MCF 10A (cell line): ENCODE measurements at regions of chr5 and their contacts with region 1.

Region 1: GRCh38 chr5:53303105-53303504 is 177.3 kb upstream of the FST start:
- DNase-seq: peak; percentile 80
- H3K4me3 Mint-ChIP-seq: no peak overlapping the region
- H3K27ac Mint-ChIP-seq: no peak overlapping the region
- H3K4me1 Mint-ChIP-seq: peaks cover 17% of the 10 kb centered on the region
- H3K27me3 Mint-ChIP-seq: no peaks in the 10 kb centered on the region
- CTCF ChIP-seq: no peak

Region 2: DNA sequence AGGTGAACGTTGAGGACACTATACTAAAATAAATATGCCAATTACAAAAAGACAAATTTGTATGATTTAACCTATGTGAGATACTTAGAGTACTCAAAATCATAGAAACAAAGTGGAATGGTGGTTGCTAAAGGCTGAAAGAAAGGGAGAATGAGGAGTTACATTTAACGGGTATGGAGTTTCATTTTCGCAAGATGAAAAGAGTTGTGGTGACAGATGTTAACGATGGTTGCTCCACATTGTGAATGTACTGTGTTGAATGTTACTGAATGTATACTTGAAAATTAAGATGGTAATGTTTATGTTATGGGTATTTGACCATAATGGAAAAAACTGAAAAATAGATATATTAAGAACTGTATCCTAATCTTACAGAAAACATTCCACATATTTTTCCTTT is 142.2 kb before region 1 on chr5:
- CTCF ChIA-PET with region 1: no interaction called
- POLR2A ChIA-PET with region 1: no interaction called
- intact Hi-C with region 1: no loop called
- DNase-seq: no peak
- H3K4me3 Mint-ChIP-seq: no peak overlapping the region
- H3K27ac Mint-ChIP-seq: no peak overlapping the region
- H3K4me1 Mint-ChIP-seq: no peaks in the 10 kb centered on the region
- H3K27me3 Mint-ChIP-seq: no peaks in the 10 kb centered on the region
- CTCF ChIP-seq: no peak

Region 3: DNA sequence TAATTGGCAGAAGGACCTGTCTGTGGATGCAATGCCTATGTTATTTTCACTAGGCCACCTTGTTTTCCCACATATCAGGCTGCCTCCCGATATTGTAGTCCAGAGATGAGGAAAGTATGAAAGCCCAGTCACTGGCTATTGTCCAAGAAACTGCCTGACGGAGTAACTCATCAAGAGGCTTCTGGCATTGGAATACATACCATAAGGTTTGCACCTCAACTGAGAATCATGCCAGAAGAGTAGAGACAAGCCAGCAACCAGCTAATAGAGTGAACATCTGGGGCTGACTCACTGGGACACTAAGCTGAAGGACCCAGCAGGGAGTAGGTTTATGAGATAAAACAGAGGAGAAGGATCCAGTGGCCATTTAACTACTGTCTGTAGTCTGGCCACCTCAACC is 40.1 kb after region 1 on chr5:
- CTCF ChIA-PET with region 1: no interaction called
- POLR2A ChIA-PET with region 1: no interaction called
- intact Hi-C with region 1: loop called (anchors 5 kb)
- DNase-seq: peak; percentile 96
- H3K4me3 Mint-ChIP-seq: no peak overlapping the region
- H3K27ac Mint-ChIP-seq: peak overlapping the region; percentile 39
- H3K4me1 Mint-ChIP-seq: peaks cover 29% of the 10 kb centered on the region
- H3K27me3 Mint-ChIP-seq: no peaks in the 10 kb centered on the region
- CTCF ChIP-seq: no peak

Region 4: GRCh38 chr5:53418844-53419646 is 115.9 kb after region 1 on chr5:
- CTCF ChIA-PET with region 1: no interaction called
- POLR2A ChIA-PET with region 1: no interaction called
- intact Hi-C with region 1: loop called (anchors 5 kb)
- DNase-seq: peak; percentile 85
- H3K4me3 Mint-ChIP-seq: peak overlapping the region; percentile 21
- H3K27ac Mint-ChIP-seq: peak overlapping the region; percentile 98
- H3K4me1 Mint-ChIP-seq: peaks cover 28% of the 10 kb centered on the region
- H3K27me3 Mint-ChIP-seq: no peaks in the 10 kb centered on the region
- CTCF ChIP-seq: no peak